ENCODE measurements at regions of chr7 and their contacts with region 1.

Region 1: DNA sequence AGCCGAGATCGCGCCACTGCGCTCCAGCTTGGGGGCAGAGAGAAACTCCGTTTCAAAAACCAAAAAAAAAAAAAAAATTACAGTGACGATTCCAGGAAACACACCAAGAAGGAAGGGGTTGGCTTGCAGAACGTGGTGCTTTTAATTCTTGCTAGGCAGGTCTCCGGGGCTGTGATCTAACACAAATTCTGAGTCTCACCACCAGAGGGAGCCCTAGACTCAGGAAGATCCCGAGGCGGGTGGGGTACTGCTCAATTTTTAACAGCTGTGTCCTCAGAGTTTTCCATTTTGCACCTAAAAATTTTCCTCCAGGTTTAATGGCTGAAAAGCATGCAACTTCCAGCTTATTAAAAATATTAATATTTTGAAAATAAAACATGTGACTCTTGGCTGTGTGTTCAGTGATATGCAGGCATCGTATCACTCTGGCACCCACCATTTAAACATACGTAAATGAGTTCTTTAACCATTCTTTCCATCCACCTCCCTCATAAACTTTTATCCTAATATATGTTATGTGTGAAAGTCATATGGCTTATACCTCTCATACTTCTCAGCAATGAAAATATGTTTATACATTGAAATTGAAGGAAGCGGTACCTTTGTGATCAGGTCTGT is 26.5 kb upstream of the NUB1 start:
- H3K4me3 Mint-ChIP-seq: no peak overlapping the region
- H3K27ac Mint-ChIP-seq: no peak overlapping the region
- H3K4me1 Mint-ChIP-seq: peaks cover 6% of the 10 kb centered on the region
- H3K27me3 Mint-ChIP-seq: peaks cover 2% of the 10 kb centered on the region

Region 2: GRCh38 chr7:151351027-151351426 is 35.9 kb after region 1 on chr7:
- intact Hi-C with region 1: loop called (anchors 1 kb)
- H3K4me3 Mint-ChIP-seq: no peak overlapping the region
- H3K27ac Mint-ChIP-seq: peak overlapping the region; percentile 82
- H3K4me1 Mint-ChIP-seq: peaks cover 26% of the 10 kb centered on the region
- H3K27me3 Mint-ChIP-seq: no peaks in the 10 kb centered on the region

Region 3: GRCh38 chr7:151448261-151449252 is 133.4 kb after region 1 on chr7:
- intact Hi-C with region 1: loop called (anchors 2 kb)
- H3K4me3 Mint-ChIP-seq: peak overlapping the region; percentile 75
- H3K27ac Mint-ChIP-seq: peak overlapping the region; percentile 40
- H3K4me1 Mint-ChIP-seq: no peaks in the 10 kb centered on the region
- H3K27me3 Mint-ChIP-seq: peaks cover 41% of the 10 kb centered on the region

Measured in dendritic cell treated with granulocyte-macrophage colony-stimulating factor and Interleukin-4, amounts not matched to agents 40 ng/mL and 50 ng/mL, for 4 days (primary cell).